ENCODE measurements at regions of chr6 and their contacts with region 1.

Region 1: GRCh38 chr6:111483736-111484632 is 966 bp upstream of the REV3L start:
- DNase-seq: peak; percentile 90
- H3K4me3 ChIP-seq: peak overlapping the region; percentile 90
- H3K27ac ChIP-seq: peak overlapping the region; percentile 91
- H3K4me1 ChIP-seq: peaks cover 46% of the 10 kb centered on the region
- CTCF ChIP-seq: no peak

Region 2: GRCh38 chr6:110873981-110874879 is 609.8 kb before region 1 on chr6 and contains the start of gene AMD1:
- CTCF ChIA-PET with region 1: no interaction called
- POLR2A ChIA-PET with region 1: no interaction called
- intact Hi-C with region 1: loop called (anchors 10 kb)
- DNase-seq: peak; percentile 98
- H3K4me3 ChIP-seq: peak within 1 kb of the TSS; percentile 94
- H3K27ac ChIP-seq: peak within 1 kb of the TSS; percentile 73
- H3K4me1 ChIP-seq: peaks cover 23% of the 10 kb centered on the region
- CTCF ChIP-seq: no peak
- total RNA-seq, gene AMD1: 64.2 and 74.3 TPM in 2 replicates

Region 3: DNA sequence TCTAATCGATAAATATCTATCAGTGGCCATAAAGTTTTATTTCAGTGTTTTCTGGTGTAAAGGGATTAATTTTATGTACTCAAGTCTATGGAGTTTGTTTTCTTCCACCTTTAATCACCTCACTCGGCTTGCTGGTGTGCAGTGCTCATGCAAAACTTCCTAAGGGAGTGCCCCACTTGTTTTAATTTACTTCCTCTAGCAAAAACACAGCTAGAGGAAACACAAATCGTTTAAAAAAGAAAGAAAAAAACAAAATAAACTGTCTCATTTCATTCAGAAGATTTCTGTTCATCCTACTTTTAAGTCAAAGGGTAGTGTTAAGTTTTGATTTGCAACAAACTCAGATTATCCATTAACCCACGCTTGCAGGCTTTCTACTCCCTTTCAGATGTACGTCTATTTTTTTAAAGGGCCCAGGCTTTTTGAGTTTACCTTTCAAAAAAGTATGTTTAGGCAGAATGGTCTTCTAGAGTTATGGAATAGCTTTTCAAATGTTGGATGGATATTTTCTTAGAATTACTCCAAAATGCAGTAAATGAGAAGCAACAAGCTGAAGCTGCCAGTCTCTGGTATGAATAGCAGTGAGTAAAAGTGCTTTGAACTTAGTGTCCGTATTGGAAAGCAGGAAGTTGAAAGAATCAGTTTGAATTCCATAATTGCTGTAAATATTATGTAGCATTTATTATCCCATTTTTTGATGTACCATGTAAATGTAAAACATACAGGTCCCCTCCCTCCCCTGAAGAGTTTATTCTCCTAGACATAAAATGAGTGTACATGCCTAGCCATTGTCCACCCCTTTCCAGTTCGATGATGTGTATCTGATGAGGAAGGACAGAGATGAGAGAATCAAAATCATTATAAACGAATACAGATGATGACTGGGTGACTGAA is 283.4 kb before region 1 on chr6:
- CTCF ChIA-PET with region 1: no interaction called
- POLR2A ChIA-PET with region 1: no interaction called
- intact Hi-C with region 1: no loop called
- DNase-seq: no peak
- H3K4me3 ChIP-seq: no peak overlapping the region
- H3K27ac ChIP-seq: no peak overlapping the region
- H3K4me1 ChIP-seq: no peaks in the 10 kb centered on the region
- CTCF ChIP-seq: no peak

Region 4: GRCh38 chr6:111211411-111212030 is 272.5 kb before region 1 on chr6:
- CTCF ChIA-PET with region 1: no interaction called
- POLR2A ChIA-PET with region 1: no interaction called
- intact Hi-C with region 1: no loop called
- DNase-seq: no peak
- H3K4me3 ChIP-seq: no peak overlapping the region
- H3K27ac ChIP-seq: no peak overlapping the region
- H3K4me1 ChIP-seq: no peaks in the 10 kb centered on the region
- CTCF ChIP-seq: no peak

Region 5: GRCh38 chr6:111565326-111566221 is 81.6 kb after region 1 on chr6:
- CTCF ChIA-PET with region 1: interaction called, 6 read pairs
- POLR2A ChIA-PET with region 1: interaction called, 7 read pairs
- intact Hi-C with region 1: loop called (anchors 1 kb)
- DNase-seq: peak; percentile 86
- H3K4me3 ChIP-seq: no peak overlapping the region
- H3K27ac ChIP-seq: peak overlapping the region; percentile 45
- H3K4me1 ChIP-seq: peaks cover 13% of the 10 kb centered on the region
- CTCF ChIP-seq: peak; percentile 73

Region 6: DNA sequence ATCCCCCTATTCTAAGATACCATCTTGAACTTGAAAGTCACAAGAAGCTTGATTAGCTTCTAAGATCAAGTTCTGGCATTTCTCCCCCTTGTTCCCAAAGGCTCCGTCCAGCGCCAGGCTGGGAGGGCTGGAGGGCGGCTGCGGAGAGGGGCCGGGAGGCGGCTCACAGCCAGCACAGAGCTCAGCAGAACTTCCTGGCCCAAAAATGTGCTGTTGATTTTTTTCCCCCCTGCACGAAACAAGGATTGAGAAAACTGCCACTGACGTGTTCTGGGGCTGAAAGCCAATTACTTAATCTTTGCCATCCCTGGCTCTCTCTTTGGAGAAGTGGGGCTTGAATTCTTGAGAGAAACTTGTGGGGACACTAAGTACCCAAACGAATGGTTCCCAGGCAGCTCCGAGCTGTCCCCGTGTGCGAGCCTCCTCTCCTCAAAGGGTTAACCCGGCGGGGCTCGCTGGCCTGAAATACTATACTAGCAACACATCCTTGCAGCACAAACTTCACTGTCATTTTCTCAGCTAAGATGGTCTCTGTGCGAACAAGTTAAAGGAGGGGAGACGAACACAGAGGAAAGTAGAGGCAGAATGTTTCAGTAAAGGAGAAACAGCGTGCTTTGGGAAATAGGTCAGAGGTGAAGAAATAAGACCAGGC is 121.2 kb after region 1 on chr6:
- CTCF ChIA-PET with region 1: interaction called, 6 read pairs
- POLR2A ChIA-PET with region 1: interaction called, 12 read pairs
- intact Hi-C with region 1: loop called (anchors 1 kb)
- DNase-seq: peak; percentile 68
- H3K4me3 ChIP-seq: peak overlapping the region; percentile 71
- H3K27ac ChIP-seq: peak overlapping the region; percentile 90
- H3K4me1 ChIP-seq: peaks cover 30% of the 10 kb centered on the region
- CTCF ChIP-seq: no peak

Region 7: GRCh38 chr6:111873178-111874024 is 389.4 kb after region 1 on chr6 and contains the start of gene FYN:
- CTCF ChIA-PET with region 1: interaction called, 3 read pairs
- POLR2A ChIA-PET with region 1: no interaction called
- intact Hi-C with region 1: loop called (anchors 5 kb)
- DNase-seq: peak; percentile 97
- H3K4me3 ChIP-seq: peak within 1 kb of the TSS; percentile 79
- H3K27ac ChIP-seq: peak within 1 kb of the TSS; percentile 64
- H3K4me1 ChIP-seq: peaks cover 31% of the 10 kb centered on the region
- CTCF ChIP-seq: peak; percentile 17; the same call in 1 of the 2 replicates
- total RNA-seq, gene FYN: 57.3 and 65.3 TPM in 2 replicates

Region 8: GRCh38 chr6:112321941-112322424 is 838.0 kb after region 1 on chr6:
- CTCF ChIA-PET with region 1: no interaction called
- POLR2A ChIA-PET with region 1: no interaction called
- intact Hi-C with region 1: no loop called
- DNase-seq: no peak
- H3K4me3 ChIP-seq: no peak overlapping the region
- H3K27ac ChIP-seq: no peak overlapping the region
- H3K4me1 ChIP-seq: no peaks in the 10 kb centered on the region
- CTCF ChIP-seq: no peak

Measured in OCI-LY7 (cell line).